ENCODE measurements at regions of chr20 and their contacts with region 1.

Region 1: GRCh38 chr20:39049684-39050554 is 87.8 kb downstream of the DHX35 start:
- DNase-seq: peak; percentile 28 to 32
- ATAC-seq: peak; percentile 82 to 83
- H3K4me3 ChIP-seq: peak overlapping the region; percentile 60 to 83 (median 68)
- H3K27ac ChIP-seq: no peak overlapping the region
- H3K4me1 ChIP-seq: peaks cover 0 to 5% of the 10 kb centered on the region in 2 donors
- H3K27me3 ChIP-seq: no peaks in the 10 kb centered on the region
- CTCF ChIP-seq: peak; percentile 86 to 97 (median 94)
- POLR2A ChIP-seq: no peak

Region 2: DNA sequence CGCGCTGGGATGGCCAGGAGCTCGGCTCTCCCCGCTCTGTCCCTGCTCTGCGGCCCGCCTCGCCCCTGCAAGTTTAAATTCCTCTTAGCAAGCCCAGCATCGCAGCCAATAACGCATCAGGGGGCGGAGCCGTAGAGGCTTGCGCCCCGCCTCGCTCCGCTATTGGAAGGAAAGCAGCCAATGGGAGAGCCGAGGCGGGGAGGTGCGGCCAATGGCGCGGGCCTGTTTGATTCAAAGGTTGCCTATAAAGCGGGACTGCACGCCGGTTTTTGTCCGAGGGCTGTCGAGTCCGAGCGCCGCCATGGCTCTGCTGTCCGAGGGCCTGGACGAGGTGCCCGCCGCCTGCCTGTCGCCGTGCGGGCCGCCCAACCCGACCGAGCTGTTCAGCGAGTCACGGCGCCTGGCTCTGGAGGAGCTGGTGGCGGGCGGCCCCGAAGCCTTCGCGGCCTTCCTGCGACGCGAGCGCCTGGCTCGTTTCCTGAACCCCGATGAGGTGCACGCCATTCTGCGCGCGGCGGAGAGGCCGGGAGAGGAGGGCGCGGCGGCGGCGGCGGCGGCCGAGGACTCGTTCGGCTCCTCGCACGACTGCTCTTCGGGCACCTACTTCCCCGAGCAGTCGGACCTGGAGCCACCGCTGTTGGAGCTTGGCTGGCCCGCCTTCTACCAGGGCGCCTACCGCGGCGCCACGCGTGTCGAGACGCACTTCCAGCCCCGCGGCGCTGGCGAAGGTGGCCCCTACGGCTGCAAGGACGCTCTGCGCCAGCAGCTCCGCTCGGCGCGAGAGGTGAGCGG is 123.6 kb before region 1 on chr20 and contains the start of gene FAM83D:
- in situ Hi-C with region 1: no loop called
- intact Hi-C with region 1: loop called (anchors 1 kb)
- DNase-seq: peak; percentile 70 to 84
- ATAC-seq: peak; percentile 96 to 97
- H3K4me3 ChIP-seq: peak within 1 kb of the TSS; percentile 51 to 76 (median 62)
- H3K27ac ChIP-seq: no peak within 1 kb of the TSS
- H3K4me1 ChIP-seq: peaks cover 5 to 11% of the 10 kb centered on the region in 2 donors
- H3K27me3 ChIP-seq: peaks cover 3 to 10% (median 7%) of the 10 kb centered on the region in 3 donors
- CTCF ChIP-seq: peak in 3 of 5 experiments; percentile 13 to 74 (median 26)
- POLR2A ChIP-seq: peak in 1 of 2 donors; percentile 72
- total RNA-seq, gene FAM83D: 0.40 TPM in 1 of 4 donors, not detected in the others

Region 3: DNA sequence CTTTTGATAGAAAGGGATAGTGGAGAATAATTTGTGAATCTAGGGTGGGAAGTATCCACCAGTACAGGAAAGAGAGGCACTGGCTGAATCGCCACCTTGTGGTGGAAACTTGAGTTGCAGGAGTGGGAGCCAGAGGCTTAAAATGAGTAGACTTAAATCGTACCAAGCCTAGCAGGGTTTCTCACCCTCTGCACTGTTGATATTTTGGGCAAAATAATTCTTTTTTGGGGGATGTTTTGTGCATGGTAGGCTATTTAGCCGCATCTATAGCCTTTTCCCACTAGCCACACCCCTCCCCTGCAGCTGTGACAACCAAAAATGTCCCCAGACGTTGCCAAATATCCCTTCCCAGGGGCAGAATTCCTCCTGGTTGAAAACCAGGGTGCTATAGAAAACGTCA is 31.3 kb after region 1 on chr20:
- in situ Hi-C with region 1: no loop called
- intact Hi-C with region 1: loop called (anchors 1 kb)
- DNase-seq: peak; percentile 35 to 54
- ATAC-seq: peak in 1 of 2 donors; percentile 72
- H3K4me3 ChIP-seq: no peak overlapping the region
- H3K27ac ChIP-seq: no peak overlapping the region
- H3K4me1 ChIP-seq: no peaks in the 10 kb centered on the region
- H3K27me3 ChIP-seq: no peaks in the 10 kb centered on the region
- CTCF ChIP-seq: peak; percentile 64 to 89 (median 71)
- POLR2A ChIP-seq: no peak